Transverse colon (tissue), 4 donors: ENCODE measurements at regions of chr10 and their contacts with region 1.

Region 1: GRCh38 chr10:11830836-11831519 is 7.8 kb downstream of the PROSER2 start:
- DNase-seq: no peak
- H3K4me3 ChIP-seq: no peak overlapping the region
- H3K27ac ChIP-seq: no peak overlapping the region
- H3K4me1 ChIP-seq: peaks cover 0 to 11% (median 0%) of the 10 kb centered on the region in 4 donors
- H3K27me3 ChIP-seq: no peaks in the 10 kb centered on the region
- CTCF ChIP-seq: no peak
- EP300 ChIP-seq: no peak
- POLR2A ChIP-seq: no peak

Region 2: DNA sequence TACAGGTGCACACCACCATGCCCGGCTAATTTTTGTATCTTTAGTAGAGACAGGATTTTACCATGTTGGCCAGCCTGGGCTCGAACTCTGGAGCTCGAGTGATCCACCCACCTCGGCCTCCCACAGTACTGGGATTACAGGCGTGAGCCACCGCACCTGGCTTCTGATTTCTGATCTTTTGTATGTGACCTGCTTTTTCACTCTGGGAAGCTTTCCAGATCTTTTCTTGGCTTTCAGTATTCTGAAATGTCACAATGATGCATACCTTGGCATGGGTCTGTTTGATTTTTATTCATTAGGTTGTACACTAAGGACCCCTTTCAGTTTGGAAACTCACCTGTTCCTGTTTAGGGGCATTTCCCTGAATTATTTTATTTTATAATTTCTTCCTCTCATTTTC is 33.7 kb after region 1 on chr10:
- in situ Hi-C with region 1: no loop called
- intact Hi-C with region 1: loop called (anchors 1 kb)
- DNase-seq: no peak
- H3K4me3 ChIP-seq: no peak overlapping the region
- H3K27ac ChIP-seq: no peak overlapping the region
- H3K4me1 ChIP-seq: no peaks in the 10 kb centered on the region
- H3K27me3 ChIP-seq: no peaks in the 10 kb centered on the region
- CTCF ChIP-seq: no peak
- EP300 ChIP-seq: no peak
- POLR2A ChIP-seq: no peak

Region 3: DNA sequence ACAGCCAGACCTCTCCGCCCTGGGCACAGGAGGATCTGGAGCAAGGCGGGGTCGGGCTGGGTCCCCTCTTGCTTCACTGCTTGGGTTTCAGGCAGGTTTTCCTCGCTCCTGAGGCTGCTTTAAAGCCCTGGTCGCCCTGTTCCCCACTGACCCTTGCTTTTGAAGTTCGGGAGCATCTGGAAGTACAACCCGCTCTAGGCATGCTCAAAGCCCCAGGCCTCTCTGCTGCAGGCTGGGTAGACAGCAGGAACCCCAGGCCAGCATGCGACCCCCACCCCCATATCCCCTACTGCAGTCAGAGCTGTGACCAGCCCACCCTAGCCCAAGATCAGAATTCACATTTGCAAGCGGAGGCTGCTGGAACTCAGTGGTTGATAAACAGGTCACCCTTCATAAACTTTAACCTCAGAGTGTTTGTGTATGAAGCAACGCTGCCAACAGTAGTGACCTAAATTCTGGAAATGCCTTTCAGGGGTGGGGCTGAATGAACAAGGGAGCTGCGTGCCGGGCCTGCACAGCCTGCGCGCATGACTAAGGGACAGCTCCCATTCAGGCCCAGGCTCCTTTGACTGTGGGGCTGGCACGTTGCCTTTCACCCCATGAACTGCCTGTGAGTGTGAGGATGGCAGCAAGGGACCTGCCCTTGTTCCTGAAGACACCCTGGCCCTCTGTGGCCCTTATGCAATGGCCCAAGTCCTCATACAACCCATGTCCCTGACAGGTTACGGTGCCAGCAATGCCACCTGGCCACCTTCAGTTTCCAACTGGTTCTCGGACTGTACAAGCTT is 44.7 kb after region 1 on chr10:
- in situ Hi-C with region 1: no loop called
- intact Hi-C with region 1: no loop called
- DNase-seq: peak; percentile 89
- H3K4me3 ChIP-seq: no peak overlapping the region
- H3K27ac ChIP-seq: peak overlapping the region; percentile 52 to 69 (median 68)
- H3K4me1 ChIP-seq: peaks cover 13 to 26% (median 23%) of the 10 kb centered on the region in 4 donors
- H3K27me3 ChIP-seq: no peaks in the 10 kb centered on the region
- CTCF ChIP-seq: no peak
- EP300 ChIP-seq: no peak
- POLR2A ChIP-seq: no peak